ENCODE measurements at regions of chr11 and their contacts with region 1.

Region 1: DNA sequence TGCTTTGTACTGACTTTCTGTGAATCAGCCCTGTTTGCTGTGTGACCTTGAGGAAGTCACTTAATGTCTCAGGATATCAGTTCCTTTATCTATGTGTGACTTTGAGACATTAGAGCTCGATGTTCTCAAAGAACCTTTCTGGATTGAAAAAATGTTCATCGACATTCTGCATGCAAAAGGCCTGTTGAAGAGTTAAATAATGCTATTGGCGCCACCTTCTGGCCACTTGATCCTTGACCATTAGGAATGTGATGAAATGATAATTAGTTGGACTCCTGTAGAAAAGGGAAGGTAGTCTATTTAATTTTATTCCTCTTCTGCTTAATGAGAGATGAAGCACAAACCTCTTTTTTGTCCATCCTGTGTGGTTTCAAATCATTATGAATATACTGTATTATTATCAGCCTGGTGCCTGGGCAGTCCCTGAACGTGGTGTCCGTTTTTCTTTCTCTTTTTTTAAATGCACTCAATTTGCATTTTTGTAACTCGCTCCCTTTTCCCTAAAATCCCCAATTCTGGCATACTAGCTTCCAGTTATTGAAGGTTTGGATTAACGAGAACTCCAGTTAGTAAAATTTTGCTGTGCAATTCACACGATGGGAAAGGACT is 20.7 kb downstream of the ELF5 start:
- DNase-seq: no peak
- H3K4me3 ChIP-seq: no peak overlapping the region
- H3K27me3 ChIP-seq: peaks cover 5% of the 10 kb centered on the region
- CTCF ChIP-seq: peak; percentile 70

Region 2: GRCh38 chr11:34366522-34366921 is 126.4 kb before region 1 on chr11:
- CTCF ChIA-PET with region 1: interaction called, 36 read pairs
- POLR2A ChIA-PET with region 1: no interaction called
- DNase-seq: no peak
- H3K4me3 ChIP-seq: no peak overlapping the region
- H3K27me3 ChIP-seq: peaks cover 3% of the 10 kb centered on the region
- CTCF ChIP-seq: peak; percentile 28; the same call in 1 of the 2 replicates

Region 3: GRCh38 chr11:34468209-34468841 is 24.6 kb before region 1 on chr11:
- CTCF ChIA-PET with region 1: interaction called, 18 read pairs
- POLR2A ChIA-PET with region 1: no interaction called
- DNase-seq: no peak
- H3K4me3 ChIP-seq: no peak overlapping the region
- H3K27me3 ChIP-seq: no peaks in the 10 kb centered on the region
- CTCF ChIP-seq: peak; percentile 72